GM23248 (cell line): ENCODE measurements at regions of chr11 and their contacts with region 1.

Region 1: GRCh38 chr11:94171693-94172440 is 43.2 kb downstream of the PANX1 start:
- DNase-seq: peak; percentile 68
- H3K4me3 ChIP-seq: no peak overlapping the region
- H3K27ac ChIP-seq: no peak overlapping the region
- H3K4me1 ChIP-seq: peaks cover 19% of the 10 kb centered on the region
- H3K27me3 ChIP-seq: no peaks in the 10 kb centered on the region

Region 2: DNA sequence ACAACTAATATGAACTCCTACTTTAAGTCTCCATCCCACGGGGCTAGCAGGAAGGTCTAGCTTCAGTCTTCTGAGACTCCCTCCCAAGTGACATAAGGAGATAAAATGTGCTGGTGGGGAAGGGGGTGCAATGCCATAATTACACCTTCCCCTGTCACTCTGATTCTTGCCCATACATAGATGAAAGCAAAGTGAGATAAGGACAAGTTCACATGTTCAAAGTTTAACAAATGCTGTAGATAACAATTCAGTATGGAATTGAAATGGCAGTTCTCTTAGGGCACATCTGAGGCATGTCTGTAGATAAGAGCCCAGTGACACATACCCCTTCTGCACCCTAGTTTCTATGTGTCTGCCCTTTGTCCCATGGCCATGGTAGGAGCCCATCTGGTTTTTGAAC is 81.5 kb before region 1 on chr11:
- in situ Hi-C with region 1: no loop called
- DNase-seq: no peak
- H3K4me3 ChIP-seq: no peak overlapping the region
- H3K27ac ChIP-seq: no peak overlapping the region
- H3K4me1 ChIP-seq: no peaks in the 10 kb centered on the region
- H3K27me3 ChIP-seq: no peaks in the 10 kb centered on the region

Region 3: DNA sequence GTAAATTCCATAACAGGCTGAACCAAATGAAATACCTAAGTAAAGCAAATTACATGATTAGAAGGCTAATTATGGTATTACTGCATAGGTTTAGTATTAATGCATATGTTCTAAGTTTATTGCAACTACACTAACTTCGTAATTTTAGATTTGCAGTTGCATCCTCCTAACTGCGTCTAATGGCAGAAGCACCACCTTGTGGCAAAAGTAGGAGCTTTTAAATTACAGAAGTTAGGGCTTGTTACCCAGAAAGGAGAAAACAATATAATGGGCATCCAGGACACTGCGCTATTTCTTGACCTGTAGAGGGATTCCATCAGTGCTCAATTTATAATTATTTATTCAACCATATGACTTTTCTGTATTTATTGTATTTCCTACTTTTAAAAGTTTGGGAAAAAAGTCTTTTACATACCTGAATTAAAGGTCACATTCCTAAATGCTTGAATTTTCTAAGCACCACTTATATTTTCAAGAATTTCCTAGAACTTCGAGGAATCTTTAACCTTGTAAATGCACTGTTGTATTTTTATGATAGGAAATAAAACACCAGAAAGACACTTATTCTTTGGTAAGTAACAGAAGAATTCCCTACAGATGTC is 245.6 kb after region 1 on chr11:
- in situ Hi-C with region 1: loop called (anchors 10 kb)
- DNase-seq: peak; percentile 64
- H3K4me3 ChIP-seq: no peak overlapping the region
- H3K27ac ChIP-seq: no peak overlapping the region
- H3K4me1 ChIP-seq: no peaks in the 10 kb centered on the region
- H3K27me3 ChIP-seq: no peaks in the 10 kb centered on the region

Region 4: DNA sequence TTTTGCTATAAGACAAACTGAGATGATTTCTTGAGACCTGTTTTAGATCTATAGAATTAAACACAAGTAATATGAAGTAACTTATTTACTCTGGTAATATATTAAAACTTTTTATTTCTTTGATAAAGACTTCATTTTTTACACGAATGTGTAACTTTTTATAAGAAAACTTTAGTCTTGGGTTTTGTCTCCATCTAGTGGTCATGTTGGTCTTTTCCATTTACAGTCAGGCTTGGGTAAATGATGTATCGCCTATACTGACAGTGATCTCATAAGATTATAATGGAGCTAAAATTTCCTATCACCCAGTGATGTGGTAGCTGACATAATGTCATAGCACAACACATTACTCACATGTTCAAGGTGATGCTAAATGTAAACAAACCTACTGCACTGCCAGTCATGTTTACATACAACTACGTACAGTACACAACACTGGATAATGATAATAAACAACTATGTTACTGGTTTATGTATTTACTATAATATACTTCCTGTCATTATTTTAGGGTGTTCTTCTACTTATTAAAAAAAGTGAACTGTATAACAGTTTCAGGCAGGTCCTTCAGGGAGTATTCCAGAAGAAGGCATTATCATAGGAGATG is 332.9 kb after region 1 on chr11:
- in situ Hi-C with region 1: loop called (anchors 5 kb)
- DNase-seq: peak; percentile 67
- H3K4me3 ChIP-seq: no peak overlapping the region
- H3K27ac ChIP-seq: no peak overlapping the region
- H3K4me1 ChIP-seq: no peaks in the 10 kb centered on the region
- H3K27me3 ChIP-seq: no peaks in the 10 kb centered on the region